ENCODE measurements at regions of chr3 and their contacts with region 1.

Region 1: DNA sequence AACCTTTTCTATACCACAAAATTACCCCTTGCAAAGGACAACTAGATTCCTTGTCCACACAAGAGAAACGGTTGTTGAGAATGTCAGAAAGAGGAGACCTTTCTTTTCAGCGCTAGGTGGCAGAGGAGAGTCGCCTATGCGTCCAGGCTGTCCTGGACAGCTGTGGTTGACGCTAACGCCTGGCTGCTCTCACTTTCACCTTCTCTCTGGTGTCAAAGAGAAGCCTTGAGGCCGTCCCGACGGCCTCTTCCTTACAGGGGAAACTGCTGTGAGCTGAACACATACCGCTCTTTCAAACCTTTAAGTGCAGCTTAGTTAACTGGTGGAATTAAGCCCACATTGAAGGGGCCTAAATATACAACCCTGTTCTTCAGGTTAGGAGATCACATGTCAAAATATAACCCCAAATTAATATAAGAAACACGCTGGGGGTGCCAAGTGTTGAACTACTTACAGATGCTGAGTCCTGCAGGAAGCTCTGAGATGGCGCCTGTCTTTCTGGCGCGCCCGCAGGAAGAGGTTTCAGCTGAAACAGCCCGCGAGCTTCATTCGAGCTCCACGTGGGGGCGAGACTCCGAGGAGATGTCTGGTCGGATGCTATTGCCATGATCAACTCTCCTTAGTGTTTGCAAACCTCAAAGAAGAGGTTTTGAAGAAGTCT is 26.1 kb upstream of the KBTBD8 start:
- DNase-seq: peak; percentile 79
- H3K4me3 Mint-ChIP-seq: peak overlapping the region; percentile 68
- H3K27ac Mint-ChIP-seq: peak overlapping the region; percentile 61
- H3K4me1 Mint-ChIP-seq: peaks cover 13% of the 10 kb centered on the region
- H3K27me3 Mint-ChIP-seq: no peaks in the 10 kb centered on the region

Region 2: DNA sequence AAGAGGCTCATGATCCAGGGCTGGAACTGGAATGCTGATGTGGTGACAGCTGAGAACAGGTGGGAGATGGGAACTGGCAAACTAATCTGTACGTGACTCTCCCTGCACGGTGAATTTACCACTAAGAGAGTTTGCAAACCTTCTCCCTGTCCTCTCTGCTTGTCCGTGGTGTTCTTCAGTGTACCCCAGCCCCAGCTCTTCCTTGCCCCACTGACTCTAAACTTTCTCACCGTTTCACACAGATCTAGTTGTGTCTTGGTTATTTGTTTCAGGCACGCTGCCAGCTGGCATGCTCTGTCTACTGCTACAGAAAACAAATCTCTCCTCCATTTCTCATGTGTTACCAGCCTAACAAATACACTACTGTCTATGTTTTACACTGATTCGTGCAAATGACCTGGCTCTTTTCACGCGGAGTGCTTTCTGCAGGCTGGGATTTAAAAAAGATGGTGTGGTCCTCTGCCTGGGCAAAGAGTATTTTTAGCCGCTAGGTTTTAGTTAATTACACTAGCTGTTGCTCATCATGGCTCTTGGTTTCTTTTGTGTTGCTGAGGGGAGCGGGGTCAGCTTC is 278.5 kb before region 1 on chr3:
- CTCF ChIA-PET with region 1: no interaction called
- POLR2A ChIA-PET with region 1: no interaction called
- intact Hi-C with region 1: no loop called
- DNase-seq: no peak
- H3K4me3 Mint-ChIP-seq: no peak overlapping the region
- H3K27ac Mint-ChIP-seq: no peak overlapping the region
- H3K4me1 Mint-ChIP-seq: no peaks in the 10 kb centered on the region
- H3K27me3 Mint-ChIP-seq: peaks cover 11% of the 10 kb centered on the region

Region 3: DNA sequence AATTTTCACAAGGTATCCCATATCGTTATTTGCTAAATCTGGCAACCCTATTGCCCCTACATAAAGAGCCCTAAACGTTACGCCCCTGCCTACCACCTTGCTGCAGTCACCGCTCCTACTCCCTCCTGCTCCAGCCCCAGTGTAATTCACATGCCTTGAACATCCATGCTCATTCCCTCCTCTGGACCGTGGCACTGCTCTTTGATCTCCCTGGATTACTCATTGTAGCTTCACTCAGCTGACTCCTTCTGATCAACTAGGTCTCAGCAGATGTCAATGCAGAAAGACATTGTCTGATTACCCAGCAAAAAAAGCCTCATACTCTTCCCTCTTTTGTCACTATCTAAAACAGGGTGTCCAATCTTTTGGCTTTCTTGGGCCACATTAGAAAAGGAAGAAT is 14.7 kb before region 1 on chr3:
- CTCF ChIA-PET with region 1: interaction called, 26 read pairs
- POLR2A ChIA-PET with region 1: interaction called, 3 read pairs
- intact Hi-C with region 1: no loop called
- DNase-seq: no peak
- H3K4me3 Mint-ChIP-seq: no peak overlapping the region
- H3K27ac Mint-ChIP-seq: no peak overlapping the region
- H3K4me1 Mint-ChIP-seq: no peaks in the 10 kb centered on the region
- H3K27me3 Mint-ChIP-seq: peaks cover 4% of the 10 kb centered on the region

Region 4: GRCh38 chr3:66989860-66990665 is 18.0 kb after region 1 on chr3:
- CTCF ChIA-PET with region 1: interaction called, 70 read pairs
- POLR2A ChIA-PET with region 1: no interaction called
- intact Hi-C with region 1: loop called (anchors 2 kb)
- DNase-seq: no peak
- H3K4me3 Mint-ChIP-seq: no peak overlapping the region
- H3K27ac Mint-ChIP-seq: no peak overlapping the region
- H3K4me1 Mint-ChIP-seq: peaks cover 5% of the 10 kb centered on the region
- H3K27me3 Mint-ChIP-seq: peaks cover 12% of the 10 kb centered on the region

Region 5: DNA sequence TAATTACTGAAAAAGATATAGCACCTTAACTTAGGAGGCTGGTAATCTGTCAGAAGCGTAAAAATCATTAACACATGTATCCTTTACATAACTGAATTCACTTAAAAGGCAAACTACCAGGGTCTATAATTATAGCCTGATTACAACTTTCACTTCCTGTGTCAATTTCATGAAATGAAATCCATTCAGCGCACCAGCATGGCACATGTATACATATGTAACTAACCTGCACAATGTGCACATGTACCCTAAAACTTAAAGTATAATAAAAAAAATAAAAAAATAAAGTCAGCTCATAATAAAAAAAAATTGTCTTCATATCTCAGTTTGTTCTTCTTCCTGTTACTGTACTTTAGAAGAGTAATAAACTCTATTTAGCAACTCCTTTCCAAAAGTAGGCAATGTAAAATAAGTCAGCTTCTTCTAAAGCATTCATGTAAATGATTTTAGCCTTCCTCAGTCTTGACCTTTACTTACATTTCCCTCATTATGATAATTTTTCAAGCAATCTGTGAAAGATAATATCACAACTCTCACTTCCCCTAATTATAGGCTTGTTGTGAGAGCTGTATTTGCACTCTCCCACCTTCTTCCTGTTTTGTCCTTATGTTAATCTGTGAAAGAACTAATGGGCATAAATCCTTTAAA is 76.2 kb after region 1 on chr3:
- CTCF ChIA-PET with region 1: interaction called, 19 read pairs
- POLR2A ChIA-PET with region 1: no interaction called
- intact Hi-C with region 1: no loop called
- DNase-seq: no peak
- H3K4me3 Mint-ChIP-seq: no peak overlapping the region
- H3K27ac Mint-ChIP-seq: no peak overlapping the region
- H3K4me1 Mint-ChIP-seq: peaks cover 3% of the 10 kb centered on the region
- H3K27me3 Mint-ChIP-seq: no peaks in the 10 kb centered on the region

Region 6: GRCh38 chr3:67113802-67114407 is 141.9 kb after region 1 on chr3:
- CTCF ChIA-PET with region 1: interaction called, 43 read pairs
- POLR2A ChIA-PET with region 1: no interaction called
- intact Hi-C with region 1: loop called (anchors 1 kb)
- DNase-seq: peak; percentile 91
- H3K4me3 Mint-ChIP-seq: no peak overlapping the region
- H3K27ac Mint-ChIP-seq: peak overlapping the region; percentile 13
- H3K4me1 Mint-ChIP-seq: peaks cover 6% of the 10 kb centered on the region
- H3K27me3 Mint-ChIP-seq: peaks cover 22% of the 10 kb centered on the region

Region 7: DNA sequence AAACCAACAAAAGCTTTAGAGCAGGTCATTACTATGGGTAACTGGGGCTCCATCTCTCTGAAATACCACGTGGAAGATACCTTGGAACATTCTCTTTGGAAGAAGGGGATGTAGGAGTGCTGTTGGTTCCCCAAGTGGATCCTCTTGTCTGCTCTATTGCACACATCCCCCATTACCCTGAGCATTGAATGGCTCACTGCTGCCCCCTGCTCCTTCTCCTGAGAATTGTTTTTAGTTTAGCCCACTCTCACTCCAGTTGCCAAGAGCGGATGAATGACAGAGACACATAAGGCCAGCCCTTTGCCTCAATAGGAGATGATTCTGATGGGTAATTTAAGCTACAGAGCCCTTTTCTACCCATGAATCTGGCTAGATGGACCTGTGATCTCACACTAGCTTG is 818.0 kb after region 1 on chr3:
- CTCF ChIA-PET with region 1: interaction called, 13 read pairs
- POLR2A ChIA-PET with region 1: no interaction called
- intact Hi-C with region 1: no loop called
- DNase-seq: peak; percentile 73
- H3K4me3 Mint-ChIP-seq: no peak overlapping the region
- H3K27ac Mint-ChIP-seq: no peak overlapping the region
- H3K4me1 Mint-ChIP-seq: peaks cover 5% of the 10 kb centered on the region
- H3K27me3 Mint-ChIP-seq: no peaks in the 10 kb centered on the region

Region 8: GRCh38 chr3:68893600-68894239 is 1921.7 kb after region 1 on chr3:
- CTCF ChIA-PET with region 1: interaction called, 11 read pairs
- POLR2A ChIA-PET with region 1: no interaction called
- intact Hi-C with region 1: no loop called
- DNase-seq: no peak
- H3K4me3 Mint-ChIP-seq: no peak overlapping the region
- H3K27ac Mint-ChIP-seq: no peak overlapping the region
- H3K4me1 Mint-ChIP-seq: no peaks in the 10 kb centered on the region
- H3K27me3 Mint-ChIP-seq: peaks cover 4% of the 10 kb centered on the region